ENCODE measurements at regions of chr6 and their contacts with region 1.

Region 1: DNA sequence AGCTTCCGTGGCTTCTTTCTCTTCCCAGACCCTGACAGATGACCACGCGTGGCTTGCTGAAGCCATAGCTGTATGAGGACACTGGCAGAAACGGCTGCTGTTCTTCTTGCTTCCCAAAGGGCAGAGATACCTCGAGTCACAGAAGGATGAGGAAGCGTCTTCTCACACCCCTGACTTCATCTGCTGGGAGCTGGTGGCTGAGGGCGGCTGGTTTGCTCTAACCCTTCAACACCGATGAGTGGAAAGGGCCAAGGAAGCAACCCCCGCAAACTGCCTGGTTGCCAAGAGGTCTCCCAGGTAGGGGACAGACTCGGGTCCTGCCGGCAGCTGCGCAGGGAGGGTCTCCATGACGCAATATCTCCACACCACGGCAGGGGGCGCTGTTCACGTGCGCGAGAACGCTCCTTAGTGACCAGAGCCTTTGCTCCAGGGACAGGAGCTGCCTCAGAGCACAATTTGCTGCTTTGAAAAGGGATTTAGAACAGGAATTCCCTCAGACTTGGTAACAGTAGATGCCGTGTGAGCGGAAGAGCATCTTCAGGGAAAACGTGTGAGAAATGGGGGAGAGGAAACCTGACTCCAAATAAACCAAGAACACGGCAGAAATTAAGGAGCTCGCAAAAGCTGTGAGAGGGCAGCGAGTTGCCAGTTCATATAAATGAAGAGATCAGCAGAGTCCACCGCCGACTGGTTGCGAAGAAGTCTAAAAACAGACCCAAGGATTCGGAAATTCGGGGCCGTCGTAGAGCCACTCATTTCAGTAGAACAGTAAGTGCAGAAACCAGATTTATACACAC is 80.2 kb downstream of the ERMARD start:
- DNase-seq: peak; percentile 67 to 88 (median 82)
- H3K4me3 ChIP-seq: peak overlapping the region in 46 of 59 donors; percentile 4 to 50 (median 34)
- H3K27ac ChIP-seq: no peak overlapping the region
- H3K27me3 ChIP-seq: no peaks in the 10 kb centered on the region
- CTCF ChIP-seq: peak; percentile 87 to 99 (median 97)

Region 2: DNA sequence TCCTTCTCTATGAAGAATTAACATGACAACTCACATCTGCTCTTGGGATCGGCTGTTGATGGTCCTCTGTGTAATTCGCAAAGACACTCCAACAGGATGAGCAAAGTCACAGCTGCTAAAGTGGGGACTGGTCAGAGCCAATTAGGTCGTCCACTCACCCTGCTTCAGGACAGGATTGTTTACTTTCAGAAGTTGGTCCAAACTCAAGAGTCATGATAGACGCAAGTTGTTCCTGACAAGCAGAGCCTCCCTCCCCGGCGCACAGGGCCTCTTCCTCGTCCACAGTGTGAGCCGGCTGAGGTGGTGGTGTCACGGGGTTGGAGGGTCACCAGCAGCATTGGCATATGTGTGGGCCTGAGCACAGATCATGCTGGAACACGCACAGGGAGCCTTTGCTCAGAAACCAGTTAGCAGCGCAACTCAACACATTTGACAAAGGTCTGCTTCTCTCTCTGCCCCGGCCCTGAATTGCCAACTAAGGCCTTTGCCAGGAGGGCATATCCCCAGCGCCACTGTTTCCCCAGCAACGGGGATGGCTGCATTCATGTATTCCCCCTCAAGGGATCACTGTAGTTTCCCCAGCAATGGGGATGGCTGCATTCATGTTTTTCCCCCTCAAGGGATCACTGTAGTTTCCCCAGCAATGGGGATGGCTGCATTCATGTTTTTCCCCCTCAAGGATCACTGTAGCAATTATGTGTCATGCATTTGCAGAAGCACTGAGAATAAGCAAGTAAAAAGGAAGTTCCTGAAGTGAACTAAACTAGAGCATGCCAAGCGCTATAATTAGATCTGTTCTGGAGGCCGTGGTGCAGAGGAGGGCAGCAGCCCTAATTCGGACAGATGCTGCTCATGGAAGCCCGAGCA is 689.7 kb before region 1 on chr6:
- intact Hi-C with region 1: no loop called
- DNase-seq: peak in 4 of 10 donors; percentile 15 to 57 (median 54)
- H3K4me3 ChIP-seq: peak overlapping the region in 1 of 59 donors; percentile 5
- H3K27ac ChIP-seq: peak overlapping the region in 33 of 59 donors; percentile 4 to 71 (median 39)
- H3K27me3 ChIP-seq: no peaks in the 10 kb centered on the region
- CTCF ChIP-seq: no peak

Region 3: GRCh38 chr6:169640351-169640852 is 191.2 kb before region 1 on chr6:
- intact Hi-C with region 1: no loop called
- DNase-seq: no peak
- H3K4me3 ChIP-seq: no peak overlapping the region
- H3K27ac ChIP-seq: no peak overlapping the region
- H3K27me3 ChIP-seq: no peaks in the 10 kb centered on the region
- CTCF ChIP-seq: peak in 13 of 56 donors; percentile 6 to 27 (median 16)

Region 4: GRCh38 chr6:169789982-169790927 is 41.4 kb before region 1 on chr6:
- intact Hi-C with region 1: loop called in 1 of 2 experiments (anchors 5 kb)
- DNase-seq: peak; percentile 57 to 87 (median 78)
- H3K4me3 ChIP-seq: peak overlapping the region; percentile 41 to 79 (median 66)
- H3K27ac ChIP-seq: peak overlapping the region in 48 of 59 donors; percentile 16 to 87 (median 67)
- H3K27me3 ChIP-seq: no peaks in the 10 kb centered on the region
- CTCF ChIP-seq: peak; percentile 40 to 99 (median 96)

Region 5: GRCh38 chr6:169915769-169916550 is 84.3 kb after region 1 on chr6:
- intact Hi-C with region 1: no loop called
- DNase-seq: peak in 1 of 10 donors; percentile 27
- H3K4me3 ChIP-seq: no peak overlapping the region
- H3K27ac ChIP-seq: no peak overlapping the region
- H3K27me3 ChIP-seq: no peaks in the 10 kb centered on the region
- CTCF ChIP-seq: no peak

Region 6: DNA sequence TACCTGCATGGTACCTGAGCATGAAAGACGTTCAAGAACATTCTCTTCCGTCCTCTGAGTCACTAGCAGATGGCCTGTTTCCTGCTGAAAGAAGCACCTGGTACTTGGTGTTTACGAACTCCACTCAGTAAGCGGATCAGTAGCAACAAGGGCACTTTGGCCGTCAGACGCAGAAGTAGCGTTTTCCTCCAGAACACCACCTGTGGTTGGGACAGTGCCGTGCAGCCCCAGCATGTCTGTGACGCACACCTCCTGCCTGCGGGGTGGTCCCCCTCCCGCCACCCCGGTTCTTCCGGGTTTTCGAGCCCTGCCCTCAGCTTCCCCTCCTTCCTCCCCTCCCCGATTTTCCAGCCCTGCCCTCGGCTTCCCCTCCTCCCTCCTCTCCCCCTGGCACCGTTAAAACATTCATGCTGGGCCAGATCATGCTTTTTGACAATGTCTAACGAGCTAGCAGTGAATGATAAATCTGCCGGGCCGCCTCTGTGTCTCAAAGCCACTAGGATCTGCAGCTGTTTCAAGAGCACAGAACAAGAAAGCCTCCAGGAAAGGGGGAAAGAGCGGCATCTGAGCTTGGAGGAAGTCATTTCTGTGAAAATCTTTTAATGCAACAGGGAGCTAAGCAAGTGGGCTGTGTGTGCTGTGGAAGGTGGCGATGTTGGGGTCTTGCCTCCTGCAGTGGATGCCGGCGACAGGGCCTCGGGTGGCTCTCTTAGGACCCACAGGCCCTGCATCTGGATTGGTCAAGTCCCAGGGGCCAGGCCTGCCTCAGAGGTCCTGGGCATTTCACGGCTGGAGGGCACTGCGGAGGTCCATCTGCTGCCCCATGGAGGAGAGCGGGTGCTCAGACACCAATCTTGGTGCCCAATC is 127.7 kb after region 1 on chr6:
- intact Hi-C with region 1: loop called in 1 of 2 experiments (anchors 5 kb)
- DNase-seq: peak in 7 of 10 donors; percentile 5 to 35 (median 16)
- H3K4me3 ChIP-seq: no peak overlapping the region
- H3K27ac ChIP-seq: no peak overlapping the region
- H3K27me3 ChIP-seq: peaks cover 0 to 15% (median 0%) of the 10 kb centered on the region in 45 donors
- CTCF ChIP-seq: no peak

Region 7: GRCh38 chr6:170046791-170047626 is 215.4 kb after region 1 on chr6:
- intact Hi-C with region 1: no loop called
- DNase-seq: peak in 6 of 10 donors; percentile 2 to 33 (median 20)
- H3K4me3 ChIP-seq: no peak overlapping the region
- H3K27ac ChIP-seq: no peak overlapping the region
- H3K27me3 ChIP-seq: peaks cover 0 to 12% (median 0%) of the 10 kb centered on the region in 45 donors
- CTCF ChIP-seq: no peak

Region 8: DNA sequence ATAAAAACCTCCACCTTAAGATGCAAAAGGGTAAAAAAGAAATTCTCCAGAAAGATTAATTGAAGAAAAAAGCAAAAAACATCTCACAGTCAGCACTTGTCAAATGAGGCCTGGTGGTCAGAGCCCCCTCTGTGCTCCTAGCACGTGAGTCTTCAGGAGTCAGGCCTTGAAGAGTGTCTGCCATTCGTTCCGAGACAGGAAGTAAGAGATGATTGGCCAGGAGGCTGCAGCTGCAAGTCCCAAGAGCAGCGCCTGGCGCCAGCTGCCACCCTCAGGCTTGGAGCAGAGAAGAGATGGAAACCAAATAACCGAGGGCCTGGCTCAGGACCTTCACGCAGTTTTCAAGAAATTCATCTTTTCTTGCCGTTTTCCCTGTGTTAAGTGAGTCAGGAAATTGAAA is 539.9 kb after region 1 on chr6:
- intact Hi-C with region 1: loop called (anchors 5 to 10 kb)
- DNase-seq: peak in 9 of 10 donors; percentile 45 to 78 (median 66)
- H3K4me3 ChIP-seq: peak overlapping the region in 7 of 59 donors; percentile 2 to 22 (median 8)
- H3K27ac ChIP-seq: peak overlapping the region in 45 of 59 donors; percentile 7 to 82 (median 60)
- H3K27me3 ChIP-seq: no peaks in the 10 kb centered on the region
- CTCF ChIP-seq: peak in 31 of 56 donors; percentile 9 to 58 (median 31)

Region 9: DNA sequence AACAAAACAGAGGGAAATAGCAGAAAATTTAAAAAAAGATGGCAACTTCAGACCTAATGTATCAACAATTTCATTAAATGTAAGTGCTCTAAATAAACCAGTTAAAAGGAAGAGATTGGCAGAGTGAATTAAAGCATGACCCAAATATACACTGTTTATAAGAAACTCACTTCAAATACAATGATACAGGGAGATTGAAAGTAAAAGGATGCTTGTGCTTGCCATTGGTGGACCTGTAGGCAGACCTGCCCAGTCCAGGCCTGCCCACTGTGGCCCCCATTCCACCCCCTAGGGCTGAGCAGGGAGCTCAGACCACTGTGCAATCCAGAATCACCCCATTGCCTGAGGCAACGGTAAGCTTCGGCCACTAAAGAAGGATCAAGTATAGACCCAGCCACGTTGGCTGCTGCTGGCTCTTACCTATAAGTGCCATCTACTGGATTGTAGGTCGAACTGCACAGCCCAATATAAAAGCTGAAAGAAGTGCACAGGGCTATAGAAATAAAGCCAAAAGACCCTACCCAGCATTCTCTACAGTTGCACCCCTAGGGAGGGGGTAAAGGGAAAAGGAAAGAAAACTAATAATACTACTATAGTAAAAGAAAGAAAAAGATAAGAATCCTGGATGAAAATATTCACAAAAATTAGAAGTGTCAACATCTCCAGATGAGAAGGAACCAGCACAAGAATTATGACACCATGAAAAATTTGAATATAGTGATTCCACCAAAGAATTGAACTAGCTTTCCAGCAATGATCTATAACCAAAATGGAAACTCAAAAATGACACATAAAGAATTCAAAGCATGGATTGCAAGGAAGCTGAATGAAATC is 685.4 kb after region 1 on chr6:
- intact Hi-C with region 1: loop called in 1 of 2 experiments (anchors 5 kb)
- DNase-seq: peak in 2 of 10 donors; percentile 16 to 29
- H3K4me3 ChIP-seq: no peak overlapping the region
- H3K27ac ChIP-seq: no peak overlapping the region
- H3K27me3 ChIP-seq: no peaks in the 10 kb centered on the region
- CTCF ChIP-seq: peak in 55 of 56 donors; percentile 17 to 76 (median 59)

Region 10: GRCh38 chr6:170529839-170530469 is 698.3 kb after region 1 on chr6:
- intact Hi-C with region 1: loop called in 1 of 2 experiments (anchors 5 kb)
- DNase-seq: peak; percentile 73 to 88 (median 80)
- H3K4me3 ChIP-seq: no peak overlapping the region
- H3K27ac ChIP-seq: peak overlapping the region in 13 of 59 donors; percentile 1 to 48 (median 12)
- H3K27me3 ChIP-seq: no peaks in the 10 kb centered on the region
- CTCF ChIP-seq: peak; percentile 74 to 96 (median 90)

Measured in dorsolateral prefrontal cortex (tissue), 120 donors.